ENCODE measurements at regions of chr1 and their contacts with region 1.

Region 1: GRCh38 chr1:151189638-151190445 is at the start of gene VPS72:
- H3K4me3 ChIP-seq: peak within 1 kb of the TSS; percentile 79
- H3K27ac ChIP-seq: peak within 1 kb of the TSS; percentile 64
- H3K4me1 ChIP-seq: no peaks in the 10 kb centered on the region
- CTCF ChIP-seq: peak; percentile 48

Region 2: GRCh38 chr1:151036363-151036762 is 153.5 kb before region 1 on chr1 and contains the start of gene BNIPL:
- CTCF ChIA-PET with region 1: no interaction called
- POLR2A ChIA-PET with region 1: no interaction called
- H3K4me3 ChIP-seq: no peak within 1 kb of the TSS
- H3K27ac ChIP-seq: no peak within 1 kb of the TSS
- H3K4me1 ChIP-seq: no peaks in the 10 kb centered on the region
- CTCF ChIP-seq: no peak

Region 3: GRCh38 chr1:151124763-151125403 is 65.0 kb before region 1 on chr1:
- CTCF ChIA-PET with region 1: no interaction called
- POLR2A ChIA-PET with region 1: no interaction called
- H3K4me3 ChIP-seq: no peak overlapping the region
- H3K27ac ChIP-seq: no peak overlapping the region
- H3K4me1 ChIP-seq: 0 out of 2 replicates have a peak, but pooled peaks cover 2% of the 10 kb centered on the region
- CTCF ChIP-seq: no peak

Region 4: DNA sequence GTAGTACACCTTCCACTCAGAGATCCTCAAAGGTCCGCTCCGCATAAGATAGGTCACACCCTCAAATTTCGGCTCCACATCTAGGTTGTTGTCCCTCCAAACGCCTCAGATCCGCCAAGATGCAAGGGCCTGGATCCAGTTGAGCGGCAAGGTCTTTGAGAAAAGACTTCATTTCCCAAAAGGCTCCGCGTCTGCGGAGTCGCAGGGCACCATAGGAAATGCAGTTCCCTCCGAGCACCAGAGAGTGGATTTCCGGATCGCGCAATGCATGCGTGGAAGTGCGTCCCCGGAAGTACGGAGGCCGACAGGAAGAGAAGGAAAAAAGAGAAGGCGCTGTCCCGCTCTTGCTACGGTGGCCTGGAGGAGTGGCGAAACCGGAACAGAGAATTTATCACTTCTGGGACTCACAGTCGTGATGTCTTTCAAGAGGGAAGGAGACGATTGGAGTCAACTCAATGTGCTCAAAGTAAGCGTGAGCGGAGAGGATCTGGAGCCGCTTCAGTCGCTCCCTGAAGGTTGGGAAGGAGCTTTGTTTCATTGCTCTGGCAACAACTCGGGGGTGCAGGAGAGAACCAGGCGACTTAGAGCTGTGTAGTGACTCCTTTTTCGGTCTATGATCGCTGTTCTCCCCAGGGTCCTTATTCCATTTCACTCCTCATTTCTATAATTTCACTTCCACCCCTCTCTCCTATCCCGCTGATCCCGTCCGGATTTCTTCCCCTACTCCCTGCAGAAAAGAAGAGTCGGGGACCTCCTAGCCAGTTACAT is 23.9 kb before region 1 on chr1 and contains the starts of genes LYSMD1 and SCNM1:
- CTCF ChIA-PET with region 1: no interaction called
- POLR2A ChIA-PET with region 1: interaction called, 23 read pairs
- H3K4me3 ChIP-seq: peak within 1 kb of the TSS; percentile 82
- H3K27ac ChIP-seq: peak within 1 kb of the TSS; percentile 63
- H3K4me1 ChIP-seq: peaks cover 6% of the 10 kb centered on the region; the same call in 1 of the 2 replicates
- CTCF ChIP-seq: no peak; the same call in 1 of the 2 replicates

Region 5: GRCh38 chr1:151472856-151473731 is 283.3 kb after region 1 on chr1:
- CTCF ChIA-PET with region 1: no interaction called
- POLR2A ChIA-PET with region 1: no interaction called
- H3K4me3 ChIP-seq: no peak overlapping the region
- H3K27ac ChIP-seq: no peak overlapping the region
- H3K4me1 ChIP-seq: no peaks in the 10 kb centered on the region
- CTCF ChIP-seq: no peak

Measured in HEK293 (cell line).